Right cardiac atrium (tissue), 5 donors: ENCODE measurements at regions of chr11 and their contacts with region 1.

Region 1: GRCh38 chr11:112174789-112175598 is at the start of gene BCO2:
- DNase-seq: peak; percentile 88 to 93 (median 90)
- ATAC-seq: peak; percentile 95 to 96
- H3K4me3 ChIP-seq: peak within 1 kb of the TSS; percentile 69
- H3K27ac ChIP-seq: peak within 1 kb of the TSS; percentile 80
- H3K4me1 ChIP-seq: no peaks in the 10 kb centered on the region
- H3K27me3 ChIP-seq: no peaks in the 10 kb centered on the region
- total RNA-seq, gene BCO2: 78.3 to 147 (median 96.8) TPM

Region 2: DNA sequence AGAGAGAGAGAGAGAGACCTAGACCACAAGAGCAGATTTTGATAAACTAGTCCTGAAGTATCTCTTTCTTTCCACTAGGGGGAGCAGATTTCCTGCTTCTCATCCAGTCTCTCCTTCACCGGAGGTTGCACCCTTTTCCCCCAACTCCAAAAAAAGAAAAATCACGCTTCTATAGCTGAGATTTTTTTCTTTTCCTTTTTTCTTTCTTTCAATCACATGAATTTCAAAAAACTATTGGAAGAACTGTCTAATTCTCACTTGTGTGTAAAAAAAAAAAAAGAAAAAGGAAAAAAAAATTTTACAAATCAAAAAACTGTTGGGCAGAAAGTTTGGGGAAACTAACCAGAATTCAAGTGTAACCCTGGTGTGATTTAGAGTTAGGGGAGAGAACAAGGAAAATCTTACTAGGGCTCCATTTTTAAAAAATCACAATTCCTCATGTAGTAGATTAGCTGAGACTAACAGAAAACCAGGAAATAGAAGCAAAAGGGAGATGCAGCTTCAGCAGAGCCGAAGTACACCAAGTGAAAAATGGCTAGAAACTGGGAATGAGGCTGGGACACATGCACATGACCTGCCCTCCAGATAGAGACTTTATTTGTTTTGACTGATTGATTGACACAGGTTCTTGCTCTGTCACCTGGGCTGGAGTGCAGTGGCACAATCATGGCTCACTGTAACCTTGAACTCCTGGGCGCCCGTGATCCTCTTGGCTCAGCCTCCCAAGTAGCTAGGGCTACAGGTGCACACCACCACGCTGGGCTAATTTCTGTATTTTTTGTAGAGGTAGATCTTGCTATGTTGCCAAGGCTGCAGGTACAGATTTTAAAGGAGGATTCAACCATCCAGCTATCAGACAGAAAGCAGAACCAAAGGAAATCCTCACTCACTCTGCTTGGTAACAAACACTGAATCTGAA is 61.2 kb before region 1 on chr11:
- intact Hi-C with region 1: loop called in 3 of 4 experiments (anchors 5 to 10 kb)
- DNase-seq: no peak
- ATAC-seq: peak; percentile 60 to 79
- H3K4me3 ChIP-seq: no peak overlapping the region
- H3K27ac ChIP-seq: no peak overlapping the region
- H3K4me1 ChIP-seq: peaks cover 1% of the 10 kb centered on the region
- H3K27me3 ChIP-seq: no peaks in the 10 kb centered on the region